Thyroid gland (tissue), 4 donors: ENCODE measurements at regions of chr19 and their contacts with region 1.

Region 1: GRCh38 chr19:5904352-5905113 is at the start of gene VMAC:
- DNase-seq: peak; percentile 100
- H3K4me3 ChIP-seq: peak within 1 kb of the TSS; percentile 81 to 93 (median 89)
- H3K27ac ChIP-seq: peak within 1 kb of the TSS; percentile 61 to 88 (median 82)
- H3K4me1 ChIP-seq: peaks cover 16 to 25% of the 10 kb centered on the region in 2 donors
- H3K27me3 ChIP-seq: no peaks in the 10 kb centered on the region
- CTCF ChIP-seq: no peak
- POLR2A ChIP-seq: peak in 1 of 2 donors; percentile 85
- total RNA-seq, gene VMAC: 14.3 to 27.2 (median 17.8) TPM

Region 2: GRCh38 chr19:5790573-5791520 is 113.7 kb before region 1 on chr19 and contains the start of gene DUS3L:
- intact Hi-C with region 1: loop called (anchors 5 kb)
- DNase-seq: peak; percentile 96 to 97
- H3K4me3 ChIP-seq: peak within 1 kb of the TSS; percentile 11 to 86 (median 44)
- H3K27ac ChIP-seq: peak within 1 kb of the TSS; percentile 87 to 98 (median 95)
- H3K4me1 ChIP-seq: peaks cover 5 to 7% of the 10 kb centered on the region in 2 donors
- H3K27me3 ChIP-seq: no peaks in the 10 kb centered on the region
- CTCF ChIP-seq: no peak
- POLR2A ChIP-seq: peak in 1 of 2 donors; percentile 58
- total RNA-seq, gene DUS3L: 34.0 to 53.3 (median 44.9) TPM

Region 3: GRCh38 chr19:5839065-5840017 is 65.2 kb before region 1 on chr19 and contains the start of gene FUT6:
- intact Hi-C with region 1: no loop called
- DNase-seq: no peak
- H3K4me3 ChIP-seq: no peak within 1 kb of the TSS
- H3K27ac ChIP-seq: no peak within 1 kb of the TSS
- H3K4me1 ChIP-seq: no peaks in the 10 kb centered on the region
- H3K27me3 ChIP-seq: no peaks in the 10 kb centered on the region
- CTCF ChIP-seq: no peak
- POLR2A ChIP-seq: no peak
- total RNA-seq, gene FUT6: not detected